Natural killer cell (primary cell): ENCODE measurements at regions of chr15 and their contacts with region 1.

Region 1: GRCh38 chr15:64430000-64430735 is 30.2 kb upstream of the ZNF609 start:
- DNase-seq: peak; percentile 19 to 84
- ATAC-seq: peak; percentile 82 to 94 (median 87)
- H3K4me3 ChIP-seq: no peak overlapping the region
- H3K4me3 Mint-ChIP-seq: peak overlapping the region; percentile 72
- H3K27ac ChIP-seq: peak overlapping the region; percentile 74
- H3K27ac Mint-ChIP-seq: peak overlapping the region; percentile 66 to 87
- H3K4me1 ChIP-seq: peaks cover 11% of the 10 kb centered on the region
- H3K4me1 Mint-ChIP-seq: peaks cover 17 to 21% of the 10 kb centered on the region in 2 donors
- H3K27me3 ChIP-seq: no peaks in the 10 kb centered on the region
- H3K27me3 Mint-ChIP-seq: no peaks in the 10 kb centered on the region
- CTCF ChIP-seq: no peak

Region 2: DNA sequence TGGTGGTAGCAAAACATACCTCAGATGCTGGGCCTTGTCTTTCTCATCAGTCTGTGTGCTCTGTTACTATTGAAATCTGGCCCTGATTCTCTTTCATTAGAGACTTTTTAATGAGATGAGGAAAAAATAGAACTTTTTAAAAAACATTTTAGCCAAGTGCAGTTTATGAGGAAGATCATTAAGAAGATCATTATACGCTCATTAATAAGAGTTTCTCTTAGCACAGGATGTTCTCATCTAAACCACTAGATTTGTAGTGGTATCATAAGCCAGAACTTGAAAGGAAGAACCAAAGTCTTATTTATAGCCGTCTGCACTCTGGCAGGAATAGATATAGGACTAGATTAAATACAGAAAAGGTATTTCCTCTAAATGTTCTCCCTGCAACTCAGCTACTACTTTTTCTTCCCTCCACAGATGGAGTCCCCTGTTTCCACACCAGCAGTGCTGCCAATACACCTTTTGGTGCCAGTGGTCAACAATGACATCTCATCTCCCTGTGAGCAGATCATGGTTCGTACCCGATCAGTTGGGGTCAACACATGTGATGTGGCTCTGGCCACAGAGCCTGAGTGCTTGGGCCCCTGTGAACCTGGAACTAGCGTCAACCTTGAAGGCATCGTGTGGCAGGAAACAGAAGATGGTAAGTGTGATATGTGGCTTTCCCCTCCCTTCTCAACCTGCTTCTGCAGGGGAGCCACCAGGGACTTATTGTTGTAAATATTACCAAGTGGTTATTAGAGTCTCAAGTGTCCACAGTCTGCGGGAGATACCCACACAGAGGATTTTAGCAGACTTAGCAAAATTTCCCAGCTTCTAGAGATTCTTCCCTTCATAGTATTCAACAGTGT is 192.5 kb after region 1 on chr15:
- intact Hi-C with region 1: loop called (anchors 5 kb)
- DNase-seq: peak; percentile 62 to 82
- ATAC-seq: peak; percentile 80 to 92 (median 91)
- H3K4me3 ChIP-seq: no peak overlapping the region
- H3K4me3 Mint-ChIP-seq: peak overlapping the region; percentile 68
- H3K27ac ChIP-seq: peak overlapping the region; percentile 74
- H3K27ac Mint-ChIP-seq: peak overlapping the region; percentile 86 to 88
- H3K4me1 ChIP-seq: peaks cover 48% of the 10 kb centered on the region
- H3K4me1 Mint-ChIP-seq: peaks cover 80 to 89% of the 10 kb centered on the region in 2 donors
- H3K27me3 ChIP-seq: no peaks in the 10 kb centered on the region
- H3K27me3 Mint-ChIP-seq: no peaks in the 10 kb centered on the region
- CTCF ChIP-seq: no peak

Region 3: GRCh38 chr15:64651573-64652260 is 221.5 kb after region 1 on chr15:
- intact Hi-C with region 1: loop called (anchors 5 kb)
- DNase-seq: peak in 1 of 2 donors; percentile 79
- ATAC-seq: peak; percentile 85 to 95 (median 92)
- H3K4me3 ChIP-seq: no peak overlapping the region
- H3K4me3 Mint-ChIP-seq: peak overlapping the region; percentile 55
- H3K27ac ChIP-seq: peak overlapping the region; percentile 54
- H3K27ac Mint-ChIP-seq: peak overlapping the region; percentile 78 to 87
- H3K4me1 ChIP-seq: peaks cover 14% of the 10 kb centered on the region
- H3K4me1 Mint-ChIP-seq: peaks cover 21% of the 10 kb centered on the region in 2 donors
- H3K27me3 ChIP-seq: no peaks in the 10 kb centered on the region
- H3K27me3 Mint-ChIP-seq: no peaks in the 10 kb centered on the region
- CTCF ChIP-seq: no peak